A673 (cell line): ENCODE measurements at regions of chr13 and their contacts with region 1.

Region 1: GRCh38 chr13:32381539-32381938 is 46.4 kb downstream of the N4BP2L1 start:
- DNase-seq: peak; percentile 24
- H3K4me3 ChIP-seq: no peak overlapping the region
- H3K27ac ChIP-seq: no peak overlapping the region
- H3K4me1 ChIP-seq: no peaks in the 10 kb centered on the region
- H3K27me3 ChIP-seq: no peaks in the 10 kb centered on the region
- CTCF ChIP-seq: peak; percentile 58

Region 2: DNA sequence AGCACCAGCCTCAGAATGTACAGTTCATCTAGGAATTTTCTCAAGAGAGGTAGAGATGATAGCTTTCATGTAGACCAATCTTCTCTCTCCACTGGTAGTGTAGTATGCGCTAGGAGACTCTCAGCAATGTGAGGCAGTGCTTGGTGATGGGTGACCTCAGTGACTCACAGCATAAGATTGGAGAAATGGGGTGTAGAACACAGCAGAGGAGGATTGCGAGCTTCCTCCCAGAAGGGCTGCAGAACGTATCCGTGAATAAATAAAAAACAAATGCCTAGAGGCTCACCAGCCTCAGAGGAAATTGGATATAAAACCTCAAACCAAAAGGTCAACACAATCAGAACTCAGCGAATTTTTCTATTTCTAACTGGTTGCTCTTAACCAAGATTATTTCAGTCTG is 825.2 kb before region 1 on chr13:
- CTCF ChIA-PET with region 1: no interaction called
- POLR2A ChIA-PET with region 1: no interaction called
- intact Hi-C with region 1: no loop called
- DNase-seq: no peak
- H3K4me3 ChIP-seq: no peak overlapping the region
- H3K27ac ChIP-seq: no peak overlapping the region
- H3K4me1 ChIP-seq: no peaks in the 10 kb centered on the region
- H3K27me3 ChIP-seq: no peaks in the 10 kb centered on the region
- CTCF ChIP-seq: no peak

Region 3: GRCh38 chr13:32354040-32354439 is 27.5 kb before region 1 on chr13:
- CTCF ChIA-PET with region 1: no interaction called
- POLR2A ChIA-PET with region 1: no interaction called
- intact Hi-C with region 1: no loop called
- DNase-seq: no peak
- H3K4me3 ChIP-seq: no peak overlapping the region
- H3K27ac ChIP-seq: no peak overlapping the region
- H3K4me1 ChIP-seq: no peaks in the 10 kb centered on the region
- H3K27me3 ChIP-seq: no peaks in the 10 kb centered on the region
- CTCF ChIP-seq: no peak

Region 4: GRCh38 chr13:32845952-32846950 is 464.7 kb after region 1 on chr13:
- CTCF ChIA-PET with region 1: no interaction called
- POLR2A ChIA-PET with region 1: interaction called, 24 read pairs
- intact Hi-C with region 1: no loop called
- DNase-seq: no peak
- H3K4me3 ChIP-seq: no peak overlapping the region
- H3K27ac ChIP-seq: no peak overlapping the region
- H3K4me1 ChIP-seq: no peaks in the 10 kb centered on the region
- H3K27me3 ChIP-seq: no peaks in the 10 kb centered on the region
- CTCF ChIP-seq: no peak